Transverse colon (tissue), 4 donors: ENCODE measurements at regions of chr5 and their contacts with region 1.

Region 1: GRCh38 chr5:35365758-35366157 is 135.5 kb upstream of the PRLR start:
- DNase-seq: no peak
- H3K4me3 ChIP-seq: no peak overlapping the region
- H3K27ac ChIP-seq: no peak overlapping the region
- H3K4me1 ChIP-seq: peaks cover 0 to 1% (median 0%) of the 10 kb centered on the region in 4 donors
- H3K27me3 ChIP-seq: no peaks in the 10 kb centered on the region
- CTCF ChIP-seq: no peak
- EP300 ChIP-seq: no peak
- POLR2A ChIP-seq: no peak

Region 2: GRCh38 chr5:35319333-35320002 is 46.3 kb before region 1 on chr5:
- in situ Hi-C with region 1: no loop called
- intact Hi-C with region 1: loop called (anchors 2 kb)
- DNase-seq: peak; percentile 58
- H3K4me3 ChIP-seq: no peak overlapping the region
- H3K27ac ChIP-seq: no peak overlapping the region
- H3K4me1 ChIP-seq: no peaks in the 10 kb centered on the region
- H3K27me3 ChIP-seq: no peaks in the 10 kb centered on the region
- CTCF ChIP-seq: no peak
- EP300 ChIP-seq: no peak
- POLR2A ChIP-seq: no peak

Region 3: DNA sequence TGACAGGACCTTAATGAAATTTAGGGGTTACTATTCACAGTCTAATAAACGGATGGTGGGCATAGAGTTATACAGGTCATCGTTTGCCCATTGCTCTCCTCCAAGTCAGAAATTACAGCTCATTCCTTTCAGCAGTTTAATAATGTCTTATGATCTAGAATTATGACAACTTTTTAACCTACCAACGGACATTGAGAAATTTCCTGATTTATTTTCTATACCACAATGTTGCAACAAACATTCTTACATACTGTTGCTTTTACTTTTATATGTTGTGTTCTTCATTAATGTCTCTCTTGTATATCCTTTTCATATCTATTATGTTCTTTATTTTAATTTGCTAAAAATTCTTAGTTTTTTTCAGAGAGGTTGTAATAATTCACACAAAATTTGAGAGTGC is 17.3 kb after region 1 on chr5:
- in situ Hi-C with region 1: no loop called
- intact Hi-C with region 1: no loop called
- DNase-seq: no peak
- H3K4me3 ChIP-seq: no peak overlapping the region
- H3K27ac ChIP-seq: no peak overlapping the region
- H3K4me1 ChIP-seq: no peaks in the 10 kb centered on the region
- H3K27me3 ChIP-seq: no peaks in the 10 kb centered on the region
- CTCF ChIP-seq: no peak
- EP300 ChIP-seq: no peak
- POLR2A ChIP-seq: no peak